Calu3 (cell line): ENCODE measurements at regions of chr20 and their contacts with region 1.

Region 1: GRCh38 chr20:62616728-62617621 is 25.3 kb upstream of the SLCO4A1 start:
- DNase-seq: peak; percentile 92
- H3K4me3 Mint-ChIP-seq: no peak overlapping the region
- H3K27ac Mint-ChIP-seq: peak overlapping the region; percentile 19
- H3K4me1 Mint-ChIP-seq: peaks cover 29% of the 10 kb centered on the region
- H3K27me3 Mint-ChIP-seq: peaks cover 42% of the 10 kb centered on the region
- CTCF ChIP-seq: peak; percentile 99

Region 2: GRCh38 chr20:62409931-62410745 is 206.8 kb before region 1 on chr20:
- CTCF ChIA-PET with region 1: interaction called, 14 read pairs
- intact Hi-C with region 1: loop called (anchors 2 kb)
- DNase-seq: peak; percentile 68
- H3K4me3 Mint-ChIP-seq: no peak overlapping the region
- H3K27ac Mint-ChIP-seq: peak overlapping the region; percentile 4
- H3K4me1 Mint-ChIP-seq: peaks cover 27% of the 10 kb centered on the region
- H3K27me3 Mint-ChIP-seq: no peaks in the 10 kb centered on the region
- CTCF ChIP-seq: peak; percentile 94

Region 3: DNA sequence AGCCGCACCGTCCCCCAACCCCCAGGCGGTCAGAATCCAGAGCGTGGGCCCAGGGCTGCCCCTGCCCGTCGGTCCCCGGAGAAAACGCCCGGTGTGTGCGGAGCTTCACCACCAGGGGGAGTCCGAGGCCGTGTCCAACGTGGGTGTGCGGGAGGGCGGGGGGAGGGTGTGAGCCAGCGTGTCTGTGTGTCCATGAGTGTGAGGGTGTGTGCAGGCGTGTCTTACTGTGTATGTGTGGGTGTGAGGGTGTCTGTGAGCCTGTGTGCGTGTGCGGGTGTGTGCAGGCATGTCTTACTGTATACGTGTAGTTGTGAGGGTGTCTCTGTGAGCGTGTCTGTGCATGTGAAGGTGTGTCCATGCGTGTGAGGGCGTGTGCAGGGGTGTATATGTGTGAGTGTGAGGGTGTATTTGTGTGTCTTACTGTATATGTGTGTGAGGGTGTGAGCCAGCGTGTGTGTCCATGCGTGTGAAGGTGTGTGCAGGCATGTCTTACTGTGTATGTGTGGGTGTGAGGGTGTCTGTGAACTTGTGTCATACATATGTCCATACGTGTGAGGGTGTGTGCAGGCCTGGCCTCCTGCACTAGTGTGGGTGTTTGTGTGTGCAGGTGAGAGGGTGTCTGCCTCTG is 116.6 kb before region 1 on chr20:
- CTCF ChIA-PET with region 1: interaction called, 18 read pairs
- intact Hi-C with region 1: loop called (anchors 5 kb)
- DNase-seq: peak; percentile 90
- H3K4me3 Mint-ChIP-seq: no peak overlapping the region
- H3K27ac Mint-ChIP-seq: peak overlapping the region; percentile 1
- H3K4me1 Mint-ChIP-seq: peaks cover 20% of the 10 kb centered on the region
- H3K27me3 Mint-ChIP-seq: peaks cover 23% of the 10 kb centered on the region
- CTCF ChIP-seq: peak; percentile 93

Region 4: DNA sequence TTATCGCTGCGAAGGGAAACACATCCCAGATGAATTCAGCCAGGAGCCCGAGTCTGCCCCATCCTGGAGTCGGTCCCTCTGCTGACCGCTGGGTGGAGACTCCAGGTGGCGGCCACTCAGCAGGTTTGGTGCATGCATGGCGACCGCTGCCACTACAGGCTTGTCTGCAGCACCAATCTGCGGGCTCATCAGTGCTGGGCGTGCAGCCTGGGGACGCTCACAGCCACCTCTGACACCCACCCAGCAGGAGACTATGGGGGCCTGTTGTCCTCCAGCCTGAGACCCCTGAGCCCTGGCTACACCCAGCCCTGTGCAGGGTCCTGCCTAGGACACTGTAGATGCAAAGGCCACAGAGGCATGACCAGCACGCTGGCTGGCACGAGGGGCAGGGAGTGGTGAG is 100.6 kb before region 1 on chr20:
- CTCF ChIA-PET with region 1: interaction called, 11 read pairs
- intact Hi-C with region 1: loop called (anchors 2 kb)
- DNase-seq: peak; percentile 75
- H3K4me3 Mint-ChIP-seq: no peak overlapping the region
- H3K27ac Mint-ChIP-seq: no peak overlapping the region
- H3K4me1 Mint-ChIP-seq: no peaks in the 10 kb centered on the region
- H3K27me3 Mint-ChIP-seq: peaks cover 99% of the 10 kb centered on the region
- CTCF ChIP-seq: peak; percentile 66

Region 5: DNA sequence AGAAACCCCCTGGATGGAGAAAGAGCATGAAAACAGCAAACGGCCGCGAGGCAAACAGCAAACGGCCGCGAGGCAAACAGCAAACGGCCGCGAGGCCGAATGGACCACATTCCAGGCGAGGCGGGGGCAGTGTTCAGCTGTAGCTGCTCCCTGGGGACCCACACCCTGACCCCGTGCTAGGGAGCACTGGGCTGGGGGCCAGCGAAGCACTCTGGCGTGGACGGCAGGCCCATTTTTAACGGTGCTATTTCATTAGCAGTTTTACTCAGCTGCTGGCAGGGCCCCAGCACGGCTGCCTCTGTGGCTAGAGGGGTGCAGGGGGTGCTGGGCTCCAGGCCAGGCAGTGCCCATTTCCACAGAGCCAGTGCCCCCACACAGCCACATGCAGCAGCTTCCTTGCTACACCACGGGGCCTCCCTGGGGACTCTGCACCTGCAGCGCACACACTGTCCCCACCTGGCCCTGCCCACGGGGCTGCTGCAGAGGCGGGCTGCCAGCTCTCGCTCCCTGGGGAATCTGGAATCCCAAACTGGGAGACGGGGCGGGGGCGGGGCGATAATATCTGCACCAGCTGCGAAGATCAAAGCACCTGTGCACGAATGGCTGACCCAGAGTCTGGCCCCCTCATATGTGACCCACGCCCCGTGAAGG is 10.3 kb before region 1 on chr20:
- CTCF ChIA-PET with region 1: interaction called, 10 read pairs
- intact Hi-C with region 1: no loop called
- DNase-seq: no peak
- H3K4me3 Mint-ChIP-seq: no peak overlapping the region
- H3K27ac Mint-ChIP-seq: no peak overlapping the region
- H3K4me1 Mint-ChIP-seq: peaks cover 10% of the 10 kb centered on the region
- H3K27me3 Mint-ChIP-seq: peaks cover 73% of the 10 kb centered on the region
- CTCF ChIP-seq: no peak

Region 6: DNA sequence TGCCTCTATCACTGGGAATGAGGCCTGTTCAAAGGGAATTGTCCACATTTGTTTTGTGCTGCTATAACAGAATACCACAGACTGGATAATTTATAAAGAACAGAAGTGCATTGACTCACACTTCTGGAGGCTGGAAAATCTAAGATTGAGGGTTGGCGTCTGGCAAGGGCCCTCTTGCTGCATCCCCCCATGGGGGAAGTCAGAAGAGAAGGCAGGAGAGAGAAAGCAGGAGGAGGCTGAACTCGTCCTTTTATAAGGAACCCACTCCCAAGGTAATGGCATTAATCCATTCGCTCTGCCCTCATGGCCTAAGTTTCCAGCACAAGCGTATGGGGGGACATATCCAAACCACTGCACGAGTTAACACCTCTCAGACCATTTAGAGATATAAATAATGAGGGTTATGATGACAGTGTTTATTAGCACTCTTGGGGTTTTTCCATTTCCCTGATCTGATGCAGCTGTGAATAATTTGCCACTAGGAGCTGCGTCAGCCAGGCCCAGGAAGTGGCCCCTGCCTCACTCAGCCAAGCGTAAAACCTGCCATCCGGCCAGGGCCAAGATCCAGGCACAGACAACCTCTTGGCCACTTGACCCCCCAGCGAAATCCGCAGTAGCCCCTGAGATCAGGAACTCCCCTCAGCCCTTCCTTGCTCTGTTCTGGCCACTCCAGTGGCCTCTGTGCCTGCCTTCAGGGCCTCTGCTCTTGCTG is 11.1 kb after region 1 on chr20:
- CTCF ChIA-PET with region 1: no interaction called
- intact Hi-C with region 1: no loop called
- DNase-seq: no peak
- H3K4me3 Mint-ChIP-seq: no peak overlapping the region
- H3K27ac Mint-ChIP-seq: no peak overlapping the region
- H3K4me1 Mint-ChIP-seq: peaks cover 20% of the 10 kb centered on the region
- H3K27me3 Mint-ChIP-seq: peaks cover 18% of the 10 kb centered on the region
- CTCF ChIP-seq: no peak